ENCODE measurements at regions of chr17 and their contacts with region 1.

Region 1: GRCh38 chr17:59746849-59747445 is 39.5 kb downstream of the VMP1 start:
- DNase-seq: peak; percentile 46
- H3K4me3 Mint-ChIP-seq: no peak overlapping the region
- H3K27ac Mint-ChIP-seq: no peak overlapping the region
- H3K4me1 Mint-ChIP-seq: peaks cover 25% of the 10 kb centered on the region
- H3K27me3 Mint-ChIP-seq: no peaks in the 10 kb centered on the region

Region 2: GRCh38 chr17:59859444-59860025 is 112.6 kb after region 1 on chr17:
- CTCF ChIA-PET with region 1: interaction called, 45 read pairs
- POLR2A ChIA-PET with region 1: interaction called, 4 read pairs
- DNase-seq: peak; percentile 44
- H3K4me3 Mint-ChIP-seq: no peak overlapping the region
- H3K27ac Mint-ChIP-seq: peak overlapping the region; percentile 25
- H3K4me1 Mint-ChIP-seq: peaks cover 24% of the 10 kb centered on the region
- H3K27me3 Mint-ChIP-seq: no peaks in the 10 kb centered on the region

Measured in activated CD4-positive, alpha-beta T cell treated with anti-CD3 and anti-CD28 coated beads, Interleukin-2, amount 10 ng/mL, durations not matched to agents 7 days and 5 days (primary cell).